Caco-2 (cell line): ENCODE measurements at regions of chr11 and their contacts with region 1.

Region 1: GRCh38 chr11:14519917-14520746 is at the start of gene PSMA1:
- DNase-seq: peak; percentile 95 to 96
- H3K4me3 ChIP-seq: peak within 1 kb of the TSS; percentile 80
- H3K4me3 Mint-ChIP-seq: peak within 1 kb of the TSS; percentile 76
- H3K27ac Mint-ChIP-seq: peak within 1 kb of the TSS; percentile 96
- H3K4me1 ChIP-seq: peaks cover 6% of the 10 kb centered on the region; the same call in 1 of the 2 replicates
- H3K4me1 Mint-ChIP-seq: peaks cover 11% of the 10 kb centered on the region
- H3K27me3 ChIP-seq: no peaks in the 10 kb centered on the region
- H3K27me3 Mint-ChIP-seq: no peaks in the 10 kb centered on the region
- CTCF ChIP-seq: peak in 1 of 2 experiments; percentile 13
- total RNA-seq, gene PSMA1: 189 and 194 TPM in 2 replicates

Region 2: DNA sequence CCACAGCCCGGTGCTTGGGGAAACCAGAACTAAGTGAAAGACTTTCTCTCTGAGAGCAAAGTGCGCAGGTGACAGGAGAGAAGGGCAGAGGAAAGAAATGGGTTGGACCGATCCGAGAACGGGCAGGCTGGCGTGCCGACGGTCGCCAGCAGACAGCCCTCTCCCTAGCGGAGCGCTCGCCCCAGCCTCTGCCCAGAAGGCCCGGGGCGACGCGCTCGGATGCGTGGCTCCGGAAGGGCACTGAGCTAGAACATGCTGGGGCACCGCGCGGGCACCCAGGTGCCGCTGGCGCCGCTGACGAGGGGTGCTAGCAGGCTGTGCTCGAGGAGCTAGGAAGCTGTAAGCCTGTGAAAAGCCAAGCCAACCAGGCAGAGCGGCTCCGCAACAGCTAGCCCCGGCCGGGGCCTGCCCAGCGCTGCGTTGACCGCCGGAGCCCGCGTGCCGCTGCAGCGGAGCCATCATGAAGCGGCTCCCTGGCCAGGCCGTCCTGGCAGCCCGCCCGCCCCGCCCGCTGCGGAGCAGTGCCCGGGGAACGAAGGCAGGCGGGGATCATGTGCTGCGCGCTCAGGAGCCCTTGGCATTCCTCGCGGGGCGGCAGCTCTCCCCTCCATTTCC is 139.1 kb before region 1 on chr11:
- CTCF ChIA-PET with region 1: no interaction called
- POLR2A ChIA-PET with region 1: no interaction called
- intact Hi-C with region 1: no loop called
- DNase-seq: peak; percentile 40 to 58
- H3K4me3 ChIP-seq: peak overlapping the region; percentile 45
- H3K4me3 Mint-ChIP-seq: peak overlapping the region; percentile 78
- H3K27ac Mint-ChIP-seq: no peak overlapping the region
- H3K4me1 ChIP-seq: peaks cover 9% of the 10 kb centered on the region
- H3K4me1 Mint-ChIP-seq: peaks cover 7% of the 10 kb centered on the region
- H3K27me3 ChIP-seq: no peaks in the 10 kb centered on the region; the same call in 1 of the 2 replicates
- H3K27me3 Mint-ChIP-seq: peaks cover 12% of the 10 kb centered on the region
- CTCF ChIP-seq: no peak

Region 3: GRCh38 chr11:14480716-14481115 is 39.4 kb before region 1 on chr11:
- CTCF ChIA-PET with region 1: no interaction called
- POLR2A ChIA-PET with region 1: no interaction called
- intact Hi-C with region 1: no loop called
- DNase-seq: no peak
- H3K4me3 ChIP-seq: no peak overlapping the region
- H3K4me3 Mint-ChIP-seq: no peak overlapping the region
- H3K27ac Mint-ChIP-seq: no peak overlapping the region
- H3K4me1 ChIP-seq: no peaks in the 10 kb centered on the region
- H3K4me1 Mint-ChIP-seq: no peaks in the 10 kb centered on the region
- H3K27me3 ChIP-seq: no peaks in the 10 kb centered on the region
- H3K27me3 Mint-ChIP-seq: no peaks in the 10 kb centered on the region
- CTCF ChIP-seq: no peak

Region 4: GRCh38 chr11:14499554-14500180 is 20.5 kb before region 1 on chr11 and contains the start of gene COPB1:
- CTCF ChIA-PET with region 1: no interaction called
- POLR2A ChIA-PET with region 1: interaction called, 5 read pairs
- intact Hi-C with region 1: loop called (anchors 1 kb)
- DNase-seq: peak; percentile 93 to 94
- H3K4me3 ChIP-seq: peak within 1 kb of the TSS; percentile 68
- H3K4me3 Mint-ChIP-seq: peak within 1 kb of the TSS; percentile 76
- H3K27ac Mint-ChIP-seq: peak within 1 kb of the TSS; percentile 87
- H3K4me1 ChIP-seq: peaks cover 12% of the 10 kb centered on the region; the same call in 1 of the 2 replicates
- H3K4me1 Mint-ChIP-seq: peaks cover 12% of the 10 kb centered on the region
- H3K27me3 ChIP-seq: no peaks in the 10 kb centered on the region
- H3K27me3 Mint-ChIP-seq: no peaks in the 10 kb centered on the region
- CTCF ChIP-seq: no peak
- total RNA-seq, gene COPB1: 120 and 125 TPM in 2 replicates

Region 5: GRCh38 chr11:14554959-14555358 is 34.8 kb after region 1 on chr11:
- CTCF ChIA-PET with region 1: no interaction called
- POLR2A ChIA-PET with region 1: no interaction called
- intact Hi-C with region 1: no loop called
- DNase-seq: no peak
- H3K4me3 ChIP-seq: no peak overlapping the region
- H3K4me3 Mint-ChIP-seq: no peak overlapping the region
- H3K27ac Mint-ChIP-seq: no peak overlapping the region
- H3K4me1 ChIP-seq: no peaks in the 10 kb centered on the region
- H3K4me1 Mint-ChIP-seq: no peaks in the 10 kb centered on the region
- H3K27me3 ChIP-seq: no peaks in the 10 kb centered on the region
- H3K27me3 Mint-ChIP-seq: no peaks in the 10 kb centered on the region
- CTCF ChIP-seq: no peak

Region 6: DNA sequence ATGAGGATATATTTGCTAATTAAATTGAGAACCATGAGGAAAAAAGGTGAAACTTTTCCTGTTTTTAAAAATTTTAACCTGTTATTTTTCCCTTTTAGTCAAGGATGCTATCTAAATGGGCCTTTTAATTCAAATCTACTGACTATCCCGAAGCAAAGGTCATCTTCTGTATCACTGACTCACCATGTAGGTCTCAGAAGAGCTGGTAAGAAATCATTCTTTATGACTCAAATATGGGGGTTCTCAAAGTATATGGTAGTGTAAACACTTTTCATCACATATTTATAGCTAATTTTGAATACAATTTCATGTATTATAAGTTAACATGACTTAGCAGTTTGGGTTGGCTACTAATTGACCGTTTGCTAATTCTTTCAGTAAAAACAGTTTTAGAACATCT is 283.7 kb after region 1 on chr11:
- CTCF ChIA-PET with region 1: no interaction called
- POLR2A ChIA-PET with region 1: no interaction called
- intact Hi-C with region 1: no loop called
- DNase-seq: no peak
- H3K4me3 ChIP-seq: no peak overlapping the region
- H3K4me3 Mint-ChIP-seq: no peak overlapping the region
- H3K27ac Mint-ChIP-seq: no peak overlapping the region
- H3K4me1 ChIP-seq: peaks cover 4% of the 10 kb centered on the region; the same call in 1 of the 2 replicates
- H3K4me1 Mint-ChIP-seq: no peaks in the 10 kb centered on the region
- H3K27me3 ChIP-seq: no peaks in the 10 kb centered on the region
- H3K27me3 Mint-ChIP-seq: no peaks in the 10 kb centered on the region
- CTCF ChIP-seq: no peak

Region 7: GRCh38 chr11:14892036-14892567 is 372.0 kb after region 1 on chr11 and contains the start of gene CYP2R1:
- CTCF ChIA-PET with region 1: no interaction called
- POLR2A ChIA-PET with region 1: no interaction called
- intact Hi-C with region 1: loop called (anchors 1 kb)
- DNase-seq: peak; percentile 99
- H3K4me3 ChIP-seq: peak within 1 kb of the TSS; percentile 78
- H3K4me3 Mint-ChIP-seq: peak within 1 kb of the TSS; percentile 99
- H3K27ac Mint-ChIP-seq: peak within 1 kb of the TSS; percentile 88
- H3K4me1 ChIP-seq: peaks cover 27% of the 10 kb centered on the region
- H3K4me1 Mint-ChIP-seq: peaks cover 26% of the 10 kb centered on the region
- H3K27me3 ChIP-seq: no peaks in the 10 kb centered on the region
- H3K27me3 Mint-ChIP-seq: no peaks in the 10 kb centered on the region
- CTCF ChIP-seq: no peak
- total RNA-seq, gene CYP2R1: 33.0 and 34.5 TPM in 2 replicates